Right ventricle myocardium inferior (tissue), 1 donor: ENCODE measurements at regions of chr4 and their contacts with region 1.

Region 1: GRCh38 chr4:78775303-78776030 is 683 bp upstream of the BMP2K start:
- DNase-seq: peak; percentile 93
- ATAC-seq: peak; percentile 88

Region 2: DNA sequence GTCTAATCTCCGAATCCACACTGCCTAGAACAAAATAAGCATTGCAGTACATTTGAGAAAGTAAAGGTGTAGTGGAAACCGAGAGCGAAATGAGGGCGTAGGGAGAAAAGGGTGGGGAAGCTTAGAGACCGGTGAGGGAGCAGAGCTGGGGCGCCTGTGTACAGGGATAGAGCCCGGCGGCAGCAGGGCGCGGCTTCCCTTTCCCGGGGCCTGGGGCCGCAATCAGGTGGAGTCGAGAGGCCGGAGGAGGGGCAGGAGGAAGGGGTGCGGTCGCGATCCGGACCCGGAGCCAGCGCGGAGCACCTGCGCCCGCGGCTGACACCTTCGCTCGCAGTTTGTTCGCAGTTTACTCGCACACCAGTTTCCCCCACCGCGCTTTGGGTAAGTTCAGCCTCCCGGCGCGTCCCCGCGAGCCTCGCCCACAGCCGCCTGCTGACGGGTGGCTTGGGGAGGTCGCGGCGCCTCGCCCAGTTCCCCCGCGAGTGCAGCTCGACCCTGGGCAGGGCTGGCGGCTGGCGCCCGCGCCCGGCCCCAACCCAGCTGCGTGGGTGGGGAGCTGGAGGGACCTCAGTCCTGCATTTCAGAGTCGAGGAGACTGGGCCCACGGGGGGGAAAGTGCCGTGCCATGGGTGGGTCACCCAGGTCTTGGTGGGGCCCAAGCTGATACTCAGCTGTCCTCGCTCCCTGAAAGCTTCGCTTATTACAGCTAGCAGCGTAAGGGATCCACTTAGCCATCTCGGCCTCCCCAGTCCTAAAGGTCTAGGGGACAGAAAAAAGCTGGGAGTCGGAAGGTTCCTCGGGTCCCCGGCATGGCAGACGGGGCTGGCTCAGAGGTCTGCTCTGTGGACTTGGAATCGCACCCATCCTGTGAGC is 223.8 kb before region 1 on chr4 and contains the start of gene ANXA3:
- intact Hi-C with region 1: loop called (anchors 10 kb)
- DNase-seq: peak; percentile 77
- ATAC-seq: peak; percentile 80
- total RNA-seq, gene ANXA3: 54.5 TPM

Region 3: GRCh38 chr4:78612398-78613178 is 162.9 kb before region 1 on chr4:
- intact Hi-C with region 1: loop called (anchors 2 kb)
- DNase-seq: no peak
- ATAC-seq: peak; percentile 72

Region 4: DNA sequence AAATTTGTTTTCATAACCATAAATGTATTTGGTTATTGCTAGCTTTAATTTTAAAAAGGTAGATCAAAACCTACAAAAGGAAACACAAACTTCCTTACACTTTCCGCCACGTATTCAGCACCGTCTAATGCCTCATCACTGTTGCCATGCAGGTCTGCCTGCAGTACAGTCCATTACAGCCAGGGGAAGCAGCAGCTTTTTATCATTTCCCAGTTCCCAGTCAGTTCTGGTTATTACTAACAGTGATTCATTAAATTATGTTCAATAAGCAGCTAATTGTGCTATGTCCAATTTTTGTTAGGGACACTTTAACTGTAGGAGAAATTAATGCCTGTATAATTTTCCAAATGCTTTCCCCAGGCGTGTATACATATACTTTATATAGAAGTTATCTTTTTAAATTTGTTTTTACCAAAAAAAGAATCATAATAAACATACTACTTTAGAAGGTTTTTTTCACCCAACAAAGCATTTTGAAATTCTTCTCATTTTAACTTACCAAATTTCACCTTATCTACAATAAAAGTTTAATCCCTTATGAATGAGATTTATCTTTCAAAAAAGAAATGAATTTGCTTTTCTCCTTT is 130.6 kb before region 1 on chr4:
- intact Hi-C with region 1: loop called (anchors 2 kb)
- DNase-seq: no peak
- ATAC-seq: peak; percentile 87

Region 5: GRCh38 chr4:78691971-78692821 is 83.3 kb before region 1 on chr4:
- intact Hi-C with region 1: loop called (anchors 5 kb)
- DNase-seq: no peak
- ATAC-seq: peak; percentile 91